Endothelial cell of umbilical vein (primary cell): ENCODE measurements at regions of chr14 and their contacts with region 1.

Region 1: DNA sequence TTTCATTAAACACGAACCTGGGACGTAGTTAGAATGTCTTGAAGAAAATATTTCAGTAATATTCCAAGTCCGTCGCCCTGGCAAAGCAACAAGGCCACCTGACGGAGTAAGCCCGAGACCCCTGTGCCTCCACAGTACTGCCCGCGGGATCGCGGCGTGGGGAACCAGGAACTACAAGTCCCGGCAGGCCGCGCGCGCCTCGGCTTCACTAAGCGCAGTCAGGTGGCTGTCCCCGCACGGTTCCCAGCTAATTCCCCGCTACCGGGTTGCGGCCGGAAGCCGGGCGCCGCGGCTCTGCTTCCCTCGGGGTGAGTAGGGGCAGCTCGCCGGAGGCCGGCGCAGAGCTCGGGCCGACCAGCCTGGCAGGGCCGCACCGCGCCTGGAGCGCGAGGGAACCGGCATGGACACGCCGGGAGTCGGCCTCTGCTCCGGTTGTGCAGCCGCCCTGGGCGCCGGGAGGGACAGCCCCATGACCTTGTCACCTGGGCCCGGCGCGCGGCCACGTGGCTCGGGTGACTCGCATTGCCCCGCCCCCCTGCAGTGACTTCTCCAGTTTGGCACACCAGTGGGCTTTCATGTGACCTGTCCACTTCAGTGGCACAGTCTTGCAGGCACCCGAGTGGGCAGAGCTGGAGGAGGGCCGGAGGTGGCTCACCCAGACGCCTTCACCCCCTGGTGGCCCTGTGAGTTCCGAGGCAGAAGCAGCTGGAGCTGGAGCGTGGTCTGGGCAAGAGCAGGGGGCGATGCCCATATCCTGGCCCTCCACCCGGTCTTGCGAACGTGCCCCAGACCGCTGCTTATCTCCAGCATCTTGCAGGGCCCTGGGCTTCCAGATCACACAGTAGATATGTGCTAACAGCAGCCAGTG is at the start of gene ADCK1:
- DNase-seq: peak; percentile 82
- H3K4me3 ChIP-seq: peak within 1 kb of the TSS; percentile 29 to 69 (median 62)
- H3K27ac ChIP-seq: peak within 1 kb of the TSS; percentile 55
- H3K4me1 ChIP-seq: peaks cover 5% of the 10 kb centered on the region
- H3K27me3 ChIP-seq: no peaks in the 10 kb centered on the region
- CTCF ChIP-seq: peak; percentile 32 to 69
- POLR2A ChIP-seq: peak; percentile 74
- total RNA-seq, gene ADCK1: 4.0 and 4.2 TPM in 2 replicates

Region 2: DNA sequence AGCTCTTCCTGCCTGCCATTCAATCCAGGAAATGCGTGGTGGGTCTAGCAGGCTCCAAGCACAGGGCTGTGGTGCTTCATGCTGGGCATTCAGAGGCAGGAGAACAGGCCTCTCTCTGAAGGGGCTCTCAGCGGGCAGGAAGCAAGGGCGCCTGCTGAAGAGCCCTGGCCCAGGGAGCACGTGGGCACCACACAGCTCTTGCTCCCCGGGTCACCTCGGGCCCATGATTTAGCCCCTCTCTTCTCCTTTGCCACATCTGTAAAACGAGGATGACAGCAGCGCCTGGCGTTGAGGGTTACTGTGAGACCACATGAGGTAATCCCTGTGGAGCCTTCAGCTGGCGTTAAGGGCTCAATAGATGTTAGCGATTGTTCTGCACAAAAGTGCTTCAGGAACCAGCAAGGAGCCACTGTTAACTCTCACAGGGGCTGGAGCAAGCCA is 146.1 kb before region 1 on chr14:
- CTCF ChIA-PET with region 1: interaction called, 13 read pairs
- POLR2A ChIA-PET with region 1: no interaction called
- dilution Hi-C with region 1: no loop called
- intact Hi-C with region 1: loop called (anchors 2 kb)
- DNase-seq: no peak
- H3K4me3 ChIP-seq: no peak overlapping the region
- H3K27ac ChIP-seq: no peak overlapping the region
- H3K4me1 ChIP-seq: peaks cover 7% of the 10 kb centered on the region
- H3K27me3 ChIP-seq: no peaks in the 10 kb centered on the region
- CTCF ChIP-seq: no peak
- POLR2A ChIP-seq: no peak

Region 3: DNA sequence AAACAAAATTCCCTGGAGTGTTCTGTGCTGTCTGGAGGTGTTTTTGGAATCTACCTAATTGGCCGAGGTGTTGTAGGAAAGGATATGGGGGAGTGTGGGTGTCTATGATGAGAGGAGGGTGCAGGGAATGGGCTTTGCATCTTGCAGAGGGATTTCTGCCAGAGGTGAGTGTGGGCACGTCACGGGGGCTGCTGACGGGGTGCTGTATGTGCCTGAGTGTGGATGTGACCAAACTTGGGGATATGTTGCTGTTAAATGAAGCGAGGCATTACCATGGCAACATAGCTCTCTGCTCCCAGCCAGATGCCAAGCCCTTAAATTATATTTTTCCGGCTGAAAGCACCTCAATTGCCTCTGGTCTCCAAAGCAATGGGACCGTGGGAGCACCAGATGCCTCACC is 139.3 kb before region 1 on chr14:
- CTCF ChIA-PET with region 1: interaction called, 13 read pairs
- POLR2A ChIA-PET with region 1: no interaction called
- dilution Hi-C with region 1: no loop called
- intact Hi-C with region 1: loop called (anchors 2 kb)
- DNase-seq: no peak
- H3K4me3 ChIP-seq: no peak overlapping the region
- H3K27ac ChIP-seq: no peak overlapping the region
- H3K4me1 ChIP-seq: peaks cover 12% of the 10 kb centered on the region
- H3K27me3 ChIP-seq: no peaks in the 10 kb centered on the region
- CTCF ChIP-seq: no peak
- POLR2A ChIP-seq: no peak

Region 4: DNA sequence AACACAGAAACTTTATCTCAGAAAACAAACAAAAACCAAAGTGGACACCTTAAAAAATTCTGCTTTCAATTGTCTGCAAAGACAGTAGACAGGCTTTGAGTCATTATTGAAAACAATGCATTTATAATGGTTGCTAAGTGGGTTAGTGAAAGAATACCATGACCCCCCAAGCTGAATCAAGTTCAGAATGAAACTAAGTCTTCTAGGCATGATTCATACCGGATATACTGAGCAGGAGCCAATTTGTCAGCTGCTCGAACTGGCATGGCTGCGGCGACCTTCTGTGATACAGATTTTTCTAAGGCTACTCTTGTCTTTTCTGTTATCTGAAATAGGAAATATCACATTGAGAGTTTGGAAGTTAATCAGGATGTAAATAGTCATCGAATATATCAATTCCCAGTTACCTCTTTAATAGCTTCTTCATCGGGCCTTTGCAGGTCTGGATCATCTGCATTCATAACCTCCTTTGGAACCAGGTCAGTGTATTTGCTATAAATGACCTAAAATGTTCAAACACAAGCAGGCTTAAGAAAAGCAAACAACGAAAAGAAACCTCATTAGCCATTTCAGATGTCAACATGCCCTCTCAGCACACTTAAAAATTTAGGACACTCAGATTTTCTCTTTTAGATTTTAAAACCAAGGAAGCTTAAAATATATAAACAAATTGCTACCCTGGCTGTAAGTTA is 61.4 kb before region 1 on chr14:
- CTCF ChIA-PET with region 1: interaction called, 4 read pairs
- POLR2A ChIA-PET with region 1: no interaction called
- dilution Hi-C with region 1: no loop called
- intact Hi-C with region 1: loop called (anchors 1 kb)
- DNase-seq: peak; percentile 87
- H3K4me3 ChIP-seq: peak overlapping the region in 1 of 3 experiments; percentile 1
- H3K27ac ChIP-seq: peak overlapping the region; percentile 78
- H3K4me1 ChIP-seq: peaks cover 16% of the 10 kb centered on the region
- H3K27me3 ChIP-seq: no peaks in the 10 kb centered on the region
- CTCF ChIP-seq: no peak
- POLR2A ChIP-seq: no peak

Region 5: DNA sequence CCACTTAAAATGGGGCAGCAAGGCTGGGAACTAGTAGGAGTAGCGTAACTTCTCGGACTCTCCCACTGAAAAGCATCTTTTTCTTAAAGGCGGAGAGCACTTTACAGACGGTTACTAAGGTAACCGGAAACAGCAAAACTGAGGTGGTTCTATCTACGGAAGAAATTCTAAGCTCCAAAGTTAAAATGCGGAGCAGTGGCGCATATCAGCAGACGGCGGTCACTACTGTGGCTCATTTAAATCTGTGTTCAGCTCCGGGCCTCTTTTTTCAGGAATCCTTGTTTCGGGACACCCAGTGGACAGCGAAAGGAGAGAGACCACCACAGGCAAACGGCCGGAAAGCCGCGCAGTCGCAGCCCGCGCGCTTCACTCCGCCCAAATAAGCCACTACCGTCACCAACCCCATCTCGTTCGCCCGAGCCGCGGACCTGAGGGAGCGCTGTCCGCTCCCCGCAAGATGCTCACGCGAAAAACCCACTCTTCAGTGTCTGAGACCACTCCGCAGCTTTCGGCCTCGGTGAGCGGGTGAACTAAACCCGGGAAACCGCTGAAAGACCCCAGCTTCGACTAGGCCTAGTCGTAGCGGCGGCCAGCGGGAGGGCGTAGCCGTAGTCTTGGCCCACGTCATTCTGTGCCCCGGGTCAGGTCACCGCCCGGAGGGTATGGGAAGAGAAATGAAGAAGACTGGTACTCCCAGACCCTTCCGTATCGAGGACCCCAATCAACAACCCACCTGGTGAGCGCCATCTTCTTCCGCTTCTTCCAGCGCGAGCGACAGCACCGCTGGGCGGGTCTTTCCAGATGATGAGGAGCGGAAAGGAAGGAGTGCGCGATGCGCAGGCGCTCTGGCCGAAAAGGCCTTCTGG is 39.5 kb before region 1 on chr14 and contains the start of gene SNW1:
- CTCF ChIA-PET with region 1: interaction called, 16 read pairs
- POLR2A ChIA-PET with region 1: no interaction called
- dilution Hi-C with region 1: no loop called
- intact Hi-C with region 1: loop called (anchors 1 kb)
- DNase-seq: peak; percentile 96
- H3K4me3 ChIP-seq: peak within 1 kb of the TSS; percentile 79 to 93 (median 82)
- H3K27ac ChIP-seq: peak within 1 kb of the TSS; percentile 94
- H3K4me1 ChIP-seq: peaks cover 8% of the 10 kb centered on the region
- H3K27me3 ChIP-seq: no peaks in the 10 kb centered on the region
- CTCF ChIP-seq: no peak
- POLR2A ChIP-seq: peak; percentile 82
- total RNA-seq, gene SNW1: 96.3 and 104 TPM in 2 replicates

Region 6: GRCh38 chr14:78519856-78520255 is 719.8 kb after region 1 on chr14:
- CTCF ChIA-PET with region 1: no interaction called
- POLR2A ChIA-PET with region 1: no interaction called
- dilution Hi-C with region 1: no loop called
- intact Hi-C with region 1: no loop called
- DNase-seq: peak; percentile 8
- H3K4me3 ChIP-seq: no peak overlapping the region
- H3K27ac ChIP-seq: no peak overlapping the region
- H3K4me1 ChIP-seq: no peaks in the 10 kb centered on the region
- H3K27me3 ChIP-seq: no peaks in the 10 kb centered on the region
- CTCF ChIP-seq: no peak
- POLR2A ChIP-seq: no peak